AG04450 (cell line): ENCODE measurements at regions of chr9 and their contacts with region 1.

Region 1: GRCh38 chr9:96856363-96857286 is 2.3 kb upstream of the ZNF782 start:
- DNase-seq: peak; percentile 32
- H3K4me3 ChIP-seq: no peak overlapping the region
- H3K27ac ChIP-seq: no peak overlapping the region
- H3K27me3 ChIP-seq: no peaks in the 10 kb centered on the region
- CTCF ChIP-seq: peak; percentile 91

Region 2: DNA sequence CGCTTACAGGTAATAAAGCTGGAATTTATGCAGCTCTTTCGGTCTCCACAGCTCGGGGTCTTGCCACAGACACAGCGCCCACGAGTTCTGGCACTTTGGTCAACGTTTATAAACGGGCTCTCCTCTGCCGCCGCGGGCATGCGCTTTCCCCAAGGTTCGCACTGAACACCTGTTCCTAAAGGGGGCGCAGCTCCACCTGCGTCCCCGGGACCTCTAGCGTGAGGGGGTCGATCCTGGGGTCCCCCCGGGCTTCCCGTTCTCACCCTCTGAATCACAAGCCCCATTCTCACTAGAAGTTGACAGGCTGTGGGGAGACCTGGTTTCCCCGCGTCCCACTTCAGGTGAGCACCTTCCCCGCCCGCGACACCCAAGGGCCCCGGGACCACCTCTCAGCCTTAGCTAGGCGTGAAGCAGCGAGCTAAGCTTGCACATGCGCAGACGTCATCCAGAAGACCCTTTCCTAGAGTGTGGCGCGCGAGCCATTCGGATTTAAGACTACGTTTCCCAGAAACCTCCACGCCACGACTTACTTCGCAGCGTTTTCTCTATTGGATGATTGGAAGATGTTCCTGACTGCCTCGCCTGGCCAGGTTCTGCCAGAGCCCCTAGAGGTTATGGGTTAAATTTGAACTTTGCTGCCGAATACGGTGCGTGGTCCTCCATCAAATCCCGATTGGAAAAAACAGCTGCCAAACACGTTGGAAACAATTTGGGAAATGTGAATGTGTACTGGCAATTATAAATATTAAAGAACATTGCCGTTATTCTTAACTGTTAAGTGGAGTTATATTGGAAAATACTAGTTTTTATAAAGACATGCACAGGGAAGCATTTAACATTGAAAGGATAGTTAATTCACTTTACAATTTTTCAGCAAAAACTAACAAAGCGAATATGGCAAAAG is 19.1 kb after region 1 on chr9:
- CTCF ChIA-PET with region 1: interaction called, 24 read pairs
- POLR2A ChIA-PET with region 1: no interaction called
- DNase-seq: peak; percentile 43
- H3K4me3 ChIP-seq: peak overlapping the region; percentile 74
- H3K27ac ChIP-seq: no peak overlapping the region
- H3K27me3 ChIP-seq: peaks cover 13% of the 10 kb centered on the region
- CTCF ChIP-seq: peak; percentile 23; the same call in 1 of the 2 replicates

Region 3: DNA sequence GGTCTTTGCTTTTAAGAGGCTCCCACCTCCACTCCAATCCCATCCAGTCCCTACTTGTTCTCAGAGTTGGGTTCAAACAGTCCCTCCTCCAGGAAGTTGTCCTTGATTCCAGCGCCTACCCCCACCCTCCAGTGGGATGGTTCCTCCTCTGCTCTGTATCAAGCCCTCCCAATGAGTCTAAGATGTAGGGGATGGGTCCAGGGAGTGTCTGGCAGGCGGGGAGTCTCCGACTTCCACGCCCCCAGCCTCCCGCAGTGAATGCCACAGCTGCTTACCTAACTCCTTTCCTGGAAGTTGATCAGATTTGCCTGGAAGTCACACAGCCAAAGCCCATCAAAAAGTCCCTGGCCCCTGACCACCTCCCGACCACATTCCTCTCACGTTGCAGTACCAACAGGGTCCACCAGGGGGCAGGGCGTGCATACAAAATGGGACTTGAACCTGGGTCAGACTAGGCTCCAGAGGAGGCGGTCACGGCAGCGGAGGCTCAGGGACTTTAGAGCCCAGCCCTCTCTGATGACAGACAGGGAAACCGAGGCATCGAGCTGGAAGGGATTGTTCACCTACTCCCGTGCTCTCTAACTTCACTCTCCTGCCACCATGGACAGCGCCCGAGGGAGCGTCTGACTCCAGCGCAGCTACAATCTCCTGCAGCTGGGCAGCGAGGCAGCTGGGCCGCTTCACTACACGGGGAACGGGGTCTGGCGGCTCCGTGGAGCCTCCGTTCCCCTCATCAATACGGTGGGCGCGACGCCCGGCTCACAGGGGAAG is 530.3 kb after region 1 on chr9:
- CTCF ChIA-PET with region 1: interaction called, 11 read pairs
- POLR2A ChIA-PET with region 1: no interaction called
- DNase-seq: peak; percentile 24
- H3K4me3 ChIP-seq: no peak overlapping the region
- H3K27ac ChIP-seq: no peak overlapping the region
- H3K27me3 ChIP-seq: peaks cover 3% of the 10 kb centered on the region
- CTCF ChIP-seq: peak; percentile 99

Region 4: GRCh38 chr9:97406620-97407177 is 550.1 kb after region 1 on chr9:
- CTCF ChIA-PET with region 1: interaction called, 34 read pairs
- POLR2A ChIA-PET with region 1: no interaction called
- DNase-seq: no peak
- H3K4me3 ChIP-seq: no peak overlapping the region
- H3K27ac ChIP-seq: no peak overlapping the region
- H3K27me3 ChIP-seq: peaks cover 10% of the 10 kb centered on the region
- CTCF ChIP-seq: no peak

Region 5: GRCh38 chr9:97468658-97469448 is 612.2 kb after region 1 on chr9:
- CTCF ChIA-PET with region 1: interaction called, 21 read pairs
- POLR2A ChIA-PET with region 1: no interaction called
- DNase-seq: peak; percentile 16
- H3K4me3 ChIP-seq: no peak overlapping the region
- H3K27ac ChIP-seq: no peak overlapping the region
- H3K27me3 ChIP-seq: no peaks in the 10 kb centered on the region
- CTCF ChIP-seq: peak; percentile 82